CD4-positive, alpha-beta T cell (primary cell): ENCODE measurements at regions of chr15 and their contacts with region 1.

Region 1: DNA sequence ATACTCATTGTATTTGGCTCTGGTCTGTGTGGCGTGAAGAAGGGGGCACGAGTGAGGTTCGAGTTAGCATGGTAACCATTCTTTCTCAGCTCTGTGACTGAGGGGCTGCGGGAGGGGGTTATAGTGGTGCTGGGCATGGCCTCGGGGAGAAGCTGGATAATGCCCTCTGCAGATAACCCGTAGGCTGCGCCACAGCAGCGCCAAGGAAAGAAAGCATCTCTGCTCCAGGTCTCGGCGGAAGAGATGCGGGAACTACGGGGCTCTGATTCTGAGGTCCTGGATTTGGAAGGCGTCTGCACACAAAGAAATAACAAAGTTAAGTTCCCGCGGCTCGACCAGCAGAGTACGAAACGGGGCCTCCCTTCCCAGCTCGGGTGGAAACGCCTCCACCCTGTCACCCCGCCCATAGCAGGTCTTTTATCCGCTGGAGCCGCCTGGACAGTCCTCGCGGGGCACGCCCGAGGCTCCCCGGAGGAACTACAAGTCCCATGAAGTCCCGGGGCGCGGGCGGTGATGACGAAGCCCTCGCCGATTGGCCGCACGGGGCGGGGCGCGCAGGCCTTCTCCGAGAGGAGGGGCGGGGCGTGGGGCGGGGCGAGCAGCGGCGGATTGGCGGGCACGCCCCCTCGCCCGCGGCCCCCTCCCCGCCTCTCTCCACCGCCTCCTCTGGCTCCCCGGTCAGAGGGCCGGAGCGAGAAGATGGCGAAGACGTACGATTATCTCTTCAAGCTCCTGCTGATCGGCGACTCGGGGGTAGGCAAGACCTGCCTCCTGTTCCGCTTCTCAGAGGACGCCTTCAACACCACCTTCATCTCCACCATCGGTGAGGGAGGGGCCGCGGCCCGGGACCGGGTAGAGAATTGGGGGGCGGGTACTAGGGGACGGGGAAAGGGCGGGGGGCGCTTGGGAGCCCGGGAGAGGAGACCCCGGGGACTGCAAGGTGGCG is at the start of gene RAB8B:
- DNase-seq: peak; percentile 94 to 99 (median 97)
- ATAC-seq: peak; percentile 69
- H3K4me3 ChIP-seq: peak within 1 kb of the TSS; percentile 88
- H3K4me3 Mint-ChIP-seq: peak within 1 kb of the TSS; percentile 96
- H3K27ac ChIP-seq: peak within 1 kb of the TSS; percentile 94 to 95
- H3K27ac Mint-ChIP-seq: peak within 1 kb of the TSS; percentile 95
- H3K4me1 ChIP-seq: peaks cover 28% of the 10 kb centered on the region
- H3K4me1 Mint-ChIP-seq: peaks cover 54% of the 10 kb centered on the region
- H3K27me3 ChIP-seq: no peaks in the 10 kb centered on the region
- H3K27me3 Mint-ChIP-seq: no peaks in the 10 kb centered on the region
- CTCF ChIP-seq: no peak
- total RNA-seq, gene RAB8B: 74.5 to 75.2 TPM

Region 2: DNA sequence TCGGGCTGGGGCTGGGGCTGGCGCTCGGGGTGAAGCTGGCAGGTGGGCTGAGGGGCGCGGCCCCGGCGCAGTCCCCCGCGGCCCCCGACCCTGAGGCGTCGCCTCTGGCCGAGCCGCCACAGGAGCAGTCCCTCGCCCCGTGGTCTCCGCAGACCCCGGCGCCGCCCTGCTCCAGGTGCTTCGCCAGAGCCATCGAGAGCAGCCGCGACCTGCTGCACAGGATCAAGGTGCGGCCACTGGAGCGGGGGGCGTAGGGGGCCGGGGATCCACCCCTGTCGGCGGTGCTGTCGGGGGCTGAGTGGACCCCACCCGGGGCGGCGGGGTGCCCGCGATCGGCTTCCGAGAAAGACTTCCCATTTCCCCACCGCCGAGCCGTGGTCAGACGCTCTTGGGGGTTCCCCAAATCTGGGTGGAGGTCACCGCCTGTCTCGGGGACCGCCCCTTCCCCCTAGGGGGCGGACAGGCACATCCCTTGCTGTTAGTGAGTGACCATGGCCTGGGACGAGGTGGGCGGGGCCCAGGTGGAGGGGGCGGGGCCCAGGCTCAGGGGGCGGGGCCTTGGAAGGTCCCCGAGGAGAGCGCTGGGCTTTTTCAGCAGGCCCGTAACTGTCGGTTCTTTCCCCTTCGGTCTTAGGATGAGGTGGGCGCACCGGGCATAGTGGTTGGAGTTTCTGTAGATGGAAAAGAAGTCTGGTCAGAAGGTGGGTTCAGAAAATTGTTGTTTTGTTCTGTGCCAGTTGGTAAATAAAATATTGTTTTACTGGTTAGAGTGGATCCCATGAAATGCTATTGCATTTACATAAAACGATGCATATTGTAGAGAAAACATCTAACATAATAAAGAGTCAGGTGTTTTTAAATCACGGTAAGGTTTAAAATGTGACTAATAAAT is 67.0 kb before region 1 on chr15:
- CTCF ChIA-PET with region 1: no interaction called
- POLR2A ChIA-PET with region 1: interaction called, 4 read pairs
- intact Hi-C with region 1: loop called in 1 of 2 experiments (anchors 1 kb)
- DNase-seq: peak; percentile 48 to 91 (median 65)
- ATAC-seq: peak; percentile 71
- H3K4me3 ChIP-seq: peak overlapping the region; percentile 90
- H3K4me3 Mint-ChIP-seq: peak overlapping the region; percentile 96
- H3K27ac ChIP-seq: peak overlapping the region; percentile 64 to 67
- H3K27ac Mint-ChIP-seq: peak overlapping the region; percentile 89
- H3K4me1 ChIP-seq: peaks cover 10% of the 10 kb centered on the region
- H3K4me1 Mint-ChIP-seq: peaks cover 17% of the 10 kb centered on the region
- H3K27me3 ChIP-seq: no peaks in the 10 kb centered on the region
- H3K27me3 Mint-ChIP-seq: no peaks in the 10 kb centered on the region
- CTCF ChIP-seq: no peak

Region 3: DNA sequence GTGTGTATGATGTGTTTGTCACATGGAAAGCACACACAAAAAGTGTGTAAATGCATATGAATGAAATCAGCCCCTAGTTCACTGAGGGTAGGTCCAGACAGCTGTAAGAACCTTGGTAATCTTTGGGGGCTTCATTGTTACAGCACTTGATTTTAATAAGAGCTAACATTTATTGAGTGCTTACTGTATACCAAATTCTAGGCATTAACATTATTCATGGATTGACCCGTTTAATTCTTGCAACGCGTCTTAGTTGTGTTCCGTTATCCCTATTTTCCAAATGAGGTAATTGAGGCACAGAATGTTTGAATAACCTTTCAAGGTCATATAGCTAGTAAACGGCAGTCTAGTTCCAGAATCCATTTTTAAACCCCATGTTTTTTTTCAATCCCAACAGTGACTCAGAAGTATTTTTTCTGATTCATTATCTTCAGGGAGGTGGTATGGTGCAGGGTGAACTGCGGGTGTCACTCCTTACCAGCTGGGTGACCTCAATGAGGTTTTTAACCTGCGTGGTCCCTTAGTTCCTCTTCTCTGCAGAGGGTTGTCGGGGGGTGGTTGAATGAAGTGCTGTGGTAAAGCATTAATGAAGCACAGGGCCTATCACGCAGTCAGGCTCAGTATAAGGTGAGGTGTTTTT is 14.4 kb after region 1 on chr15:
- CTCF ChIA-PET with region 1: interaction called, 8 read pairs
- POLR2A ChIA-PET with region 1: interaction called, 98 read pairs
- intact Hi-C with region 1: loop called in 1 of 2 experiments (anchors 1 kb)
- DNase-seq: peak in 10 of 14 experiments; percentile 15 to 75 (median 34)
- ATAC-seq: peak; percentile 92
- H3K4me3 ChIP-seq: no peak overlapping the region
- H3K4me3 Mint-ChIP-seq: peak overlapping the region; percentile 40
- H3K27ac ChIP-seq: no peak overlapping the region
- H3K27ac Mint-ChIP-seq: peak overlapping the region; percentile 48
- H3K4me1 ChIP-seq: peaks cover 58% of the 10 kb centered on the region
- H3K4me1 Mint-ChIP-seq: peaks cover 92% of the 10 kb centered on the region
- H3K27me3 ChIP-seq: no peaks in the 10 kb centered on the region
- H3K27me3 Mint-ChIP-seq: no peaks in the 10 kb centered on the region
- CTCF ChIP-seq: no peak

Region 4: GRCh38 chr15:63226966-63227401 is 37.8 kb after region 1 on chr15:
- CTCF ChIA-PET with region 1: interaction called, 9 read pairs
- POLR2A ChIA-PET with region 1: interaction called, 176 read pairs
- intact Hi-C with region 1: loop called (anchors 1 to 5 kb)
- DNase-seq: no peak
- ATAC-seq: no peak
- H3K4me3 ChIP-seq: no peak overlapping the region
- H3K4me3 Mint-ChIP-seq: no peak overlapping the region
- H3K27ac ChIP-seq: peak overlapping the region in 1 of 2 donors; percentile 4
- H3K27ac Mint-ChIP-seq: peak overlapping the region; percentile 86
- H3K4me1 ChIP-seq: peaks cover 16% of the 10 kb centered on the region
- H3K4me1 Mint-ChIP-seq: peaks cover 83% of the 10 kb centered on the region
- H3K27me3 ChIP-seq: no peaks in the 10 kb centered on the region
- H3K27me3 Mint-ChIP-seq: no peaks in the 10 kb centered on the region
- CTCF ChIP-seq: no peak

Region 5: GRCh38 chr15:63246691-63247464 is 57.7 kb after region 1 on chr15:
- CTCF ChIA-PET with region 1: no interaction called
- POLR2A ChIA-PET with region 1: interaction called, 18 read pairs
- intact Hi-C with region 1: loop called in 1 of 2 experiments (anchors 5 kb)
- DNase-seq: peak in 2 of 14 experiments; percentile 58 to 68
- ATAC-seq: no peak
- H3K4me3 ChIP-seq: no peak overlapping the region
- H3K4me3 Mint-ChIP-seq: no peak overlapping the region
- H3K27ac ChIP-seq: no peak overlapping the region
- H3K27ac Mint-ChIP-seq: peak overlapping the region; percentile 64
- H3K4me1 ChIP-seq: peaks cover 27% of the 10 kb centered on the region
- H3K4me1 Mint-ChIP-seq: peaks cover 69% of the 10 kb centered on the region
- H3K27me3 ChIP-seq: no peaks in the 10 kb centered on the region
- H3K27me3 Mint-ChIP-seq: no peaks in the 10 kb centered on the region
- CTCF ChIP-seq: no peak

Region 6: GRCh38 chr15:63430766-63431449 is 241.7 kb after region 1 on chr15:
- CTCF ChIA-PET with region 1: no interaction called
- POLR2A ChIA-PET with region 1: no interaction called
- intact Hi-C with region 1: no loop called
- DNase-seq: no peak
- ATAC-seq: no peak
- H3K4me3 ChIP-seq: no peak overlapping the region
- H3K4me3 Mint-ChIP-seq: no peak overlapping the region
- H3K27ac ChIP-seq: no peak overlapping the region
- H3K27ac Mint-ChIP-seq: no peak overlapping the region
- H3K4me1 ChIP-seq: no peaks in the 10 kb centered on the region
- H3K4me1 Mint-ChIP-seq: peaks cover 13% of the 10 kb centered on the region
- H3K27me3 ChIP-seq: no peaks in the 10 kb centered on the region
- H3K27me3 Mint-ChIP-seq: peaks cover 3% of the 10 kb centered on the region
- CTCF ChIP-seq: no peak

Region 7: GRCh38 chr15:63600616-63601025 is 411.4 kb after region 1 on chr15:
- CTCF ChIA-PET with region 1: no interaction called
- POLR2A ChIA-PET with region 1: interaction called, 3 read pairs
- intact Hi-C with region 1: loop called in 1 of 2 experiments (anchors 10 kb)
- DNase-seq: peak; percentile 78 to 98 (median 88)
- ATAC-seq: peak; percentile 77
- H3K4me3 ChIP-seq: peak overlapping the region; percentile 79
- H3K4me3 Mint-ChIP-seq: peak overlapping the region; percentile 95
- H3K27ac ChIP-seq: peak overlapping the region; percentile 63 to 75
- H3K27ac Mint-ChIP-seq: peak overlapping the region; percentile 90
- H3K4me1 ChIP-seq: peaks cover 55% of the 10 kb centered on the region
- H3K4me1 Mint-ChIP-seq: peaks cover 73% of the 10 kb centered on the region
- H3K27me3 ChIP-seq: no peaks in the 10 kb centered on the region
- H3K27me3 Mint-ChIP-seq: no peaks in the 10 kb centered on the region
- CTCF ChIP-seq: no peak